Mammary epithelial cell (primary cell): ENCODE measurements at regions of chr2 and their contacts with region 1.

Region 1: GRCh38 chr2:190904640-190905261 is 24.1 kb downstream of the GLS start:
- DNase-seq: no peak
- H3K4me3 ChIP-seq: no peak overlapping the region
- H3K27ac ChIP-seq: no peak overlapping the region
- H3K4me1 ChIP-seq: no peaks in the 10 kb centered on the region
- H3K27me3 ChIP-seq: no peaks in the 10 kb centered on the region
- CTCF ChIP-seq: no peak

Region 2: GRCh38 chr2:190920085-190920484 is 15.3 kb after region 1 on chr2:
- CTCF ChIA-PET with region 1: no interaction called
- dilution Hi-C with region 1: no loop called
- in situ Hi-C with region 1: no loop called
- intact Hi-C with region 1: loop called (anchors 1 kb)
- DNase-seq: no peak
- H3K4me3 ChIP-seq: no peak overlapping the region
- H3K27ac ChIP-seq: no peak overlapping the region
- H3K4me1 ChIP-seq: peaks cover 5% of the 10 kb centered on the region
- H3K27me3 ChIP-seq: no peaks in the 10 kb centered on the region
- CTCF ChIP-seq: no peak

Region 3: GRCh38 chr2:191128172-191128910 is 223.6 kb after region 1 on chr2:
- CTCF ChIA-PET with region 1: no interaction called
- dilution Hi-C with region 1: no loop called
- in situ Hi-C with region 1: no loop called
- intact Hi-C with region 1: no loop called
- DNase-seq: no peak
- H3K4me3 ChIP-seq: no peak overlapping the region
- H3K27ac ChIP-seq: no peak overlapping the region
- H3K4me1 ChIP-seq: no peaks in the 10 kb centered on the region
- H3K27me3 ChIP-seq: no peaks in the 10 kb centered on the region
- CTCF ChIP-seq: no peak